ENCODE measurements at regions of chr15 and their contacts with region 1.

Region 1: GRCh38 chr15:82855286-82856100 is 46.1 kb downstream of the WHAMM start:
- DNase-seq: no peak
- ATAC-seq: no peak
- H3K4me3 Mint-ChIP-seq: peak overlapping the region; percentile 7
- H3K27ac Mint-ChIP-seq: no peak overlapping the region
- H3K4me1 Mint-ChIP-seq: peaks cover 13% of the 10 kb centered on the region
- H3K27me3 Mint-ChIP-seq: no peaks in the 10 kb centered on the region
- CTCF ChIP-seq: no peak

Region 2: DNA sequence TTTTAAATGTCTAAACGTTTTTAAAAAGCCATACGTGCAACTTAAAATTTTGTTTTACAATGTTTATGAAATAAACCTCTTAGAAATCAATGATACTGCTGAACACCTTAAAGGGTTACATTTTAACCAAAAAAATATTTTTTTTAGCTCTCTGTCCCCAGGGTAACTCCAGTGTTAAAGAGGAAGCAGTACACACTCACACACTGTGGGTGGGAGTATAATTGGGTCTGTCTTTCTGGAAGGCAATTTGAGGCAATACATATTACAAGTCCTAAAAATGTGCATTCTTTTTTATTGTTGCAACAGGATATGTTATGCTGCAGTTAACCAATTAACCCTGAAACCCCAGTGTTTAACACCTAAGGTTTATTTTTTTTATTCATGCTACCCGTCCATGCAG is 11.9 kb before region 1 on chr15:
- CTCF ChIA-PET with region 1: no interaction called
- POLR2A ChIA-PET with region 1: interaction called, 6 read pairs
- intact Hi-C with region 1: loop called (anchors 1 kb)
- DNase-seq: no peak
- ATAC-seq: no peak
- H3K4me3 Mint-ChIP-seq: peak overlapping the region; percentile 28
- H3K27ac Mint-ChIP-seq: peak overlapping the region; percentile 53
- H3K4me1 Mint-ChIP-seq: peaks cover 31% of the 10 kb centered on the region
- H3K27me3 Mint-ChIP-seq: no peaks in the 10 kb centered on the region
- CTCF ChIP-seq: no peak

Measured in activated B cell treated with CpG ODN at 0.5 μM for 24 hours (primary cell).